BJ (cell line): ENCODE measurements at regions of chr19 and their contacts with region 1.

Region 1: DNA sequence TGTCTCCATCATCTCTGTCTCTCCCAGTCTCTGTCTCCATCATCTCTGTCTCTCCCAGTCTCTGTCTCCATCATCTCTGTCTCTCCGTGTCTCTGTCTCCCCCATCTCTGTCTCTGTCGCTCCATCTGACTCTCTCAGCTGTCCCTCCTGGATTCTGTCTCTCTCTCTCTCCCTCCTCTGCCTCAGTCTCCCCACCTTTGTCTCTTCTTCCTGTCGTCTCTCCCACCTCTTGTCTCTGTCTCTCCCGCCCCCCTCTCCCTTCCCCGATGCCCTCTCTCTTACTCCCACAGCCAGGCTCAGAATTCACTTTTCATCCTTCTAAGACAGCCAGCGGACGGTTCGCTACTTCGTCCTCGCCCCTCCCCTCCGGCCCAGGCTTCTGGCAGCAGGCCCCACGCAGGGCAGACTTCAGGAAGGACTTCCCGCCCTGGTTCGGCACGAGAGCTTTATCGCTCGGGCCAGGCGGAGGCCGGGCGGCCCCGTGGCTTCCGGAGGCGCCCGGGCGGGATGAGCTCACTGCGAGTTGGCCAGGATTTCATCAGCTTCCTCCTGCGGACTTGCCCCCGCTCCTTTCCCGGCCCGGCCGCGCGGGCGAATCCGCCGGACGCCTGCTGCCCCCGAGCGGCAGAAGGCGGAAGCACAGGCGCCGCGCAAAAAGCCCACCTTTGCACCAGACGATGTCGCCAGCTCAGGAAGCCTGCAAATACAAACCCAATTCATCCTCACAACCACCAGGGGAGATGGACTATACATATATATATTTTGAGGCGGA is 12.4 kb upstream of the CCDC9 start:
- DNase-seq: peak; percentile 80
- H3K4me3 ChIP-seq: peak overlapping the region; percentile 55
- H3K27me3 ChIP-seq: no peaks in the 10 kb centered on the region
- CTCF ChIP-seq: peak; percentile 93

Region 2: GRCh38 chr19:46579361-46579879 is 664.5 kb before region 1 on chr19:
- CTCF ChIA-PET with region 1: no interaction called
- POLR2A ChIA-PET with region 1: interaction called, 21 read pairs
- DNase-seq: no peak
- H3K4me3 ChIP-seq: no peak overlapping the region
- H3K27me3 ChIP-seq: no peaks in the 10 kb centered on the region; the same call in none of the 2 replicates
- CTCF ChIP-seq: peak; percentile 38; the same call in 1 of the 2 replicates

Region 3: GRCh38 chr19:47157431-47158321 is 86.3 kb before region 1 on chr19:
- CTCF ChIA-PET with region 1: interaction called, 339 read pairs
- POLR2A ChIA-PET with region 1: interaction called, 5 read pairs
- DNase-seq: no peak
- H3K4me3 ChIP-seq: no peak overlapping the region
- H3K27me3 ChIP-seq: no peaks in the 10 kb centered on the region
- CTCF ChIP-seq: no peak

Region 4: GRCh38 chr19:47225746-47226425 is 18.1 kb before region 1 on chr19:
- CTCF ChIA-PET with region 1: interaction called, 44 read pairs
- POLR2A ChIA-PET with region 1: interaction called, 9 read pairs
- DNase-seq: no peak
- H3K4me3 ChIP-seq: peak overlapping the region; percentile 77
- H3K27me3 ChIP-seq: no peaks in the 10 kb centered on the region
- CTCF ChIP-seq: 0 out of 2 replicates have a peak, but pooled peaks have one; percentile 6

Region 5: GRCh38 chr19:47256688-47257443 is 12.9 kb after region 1 on chr19:
- CTCF ChIA-PET with region 1: interaction called, 85 read pairs
- POLR2A ChIA-PET with region 1: interaction called, 5 read pairs
- DNase-seq: peak; percentile 87
- H3K4me3 ChIP-seq: peak overlapping the region; percentile 63
- H3K27me3 ChIP-seq: no peaks in the 10 kb centered on the region
- CTCF ChIP-seq: no peak

Region 6: DNA sequence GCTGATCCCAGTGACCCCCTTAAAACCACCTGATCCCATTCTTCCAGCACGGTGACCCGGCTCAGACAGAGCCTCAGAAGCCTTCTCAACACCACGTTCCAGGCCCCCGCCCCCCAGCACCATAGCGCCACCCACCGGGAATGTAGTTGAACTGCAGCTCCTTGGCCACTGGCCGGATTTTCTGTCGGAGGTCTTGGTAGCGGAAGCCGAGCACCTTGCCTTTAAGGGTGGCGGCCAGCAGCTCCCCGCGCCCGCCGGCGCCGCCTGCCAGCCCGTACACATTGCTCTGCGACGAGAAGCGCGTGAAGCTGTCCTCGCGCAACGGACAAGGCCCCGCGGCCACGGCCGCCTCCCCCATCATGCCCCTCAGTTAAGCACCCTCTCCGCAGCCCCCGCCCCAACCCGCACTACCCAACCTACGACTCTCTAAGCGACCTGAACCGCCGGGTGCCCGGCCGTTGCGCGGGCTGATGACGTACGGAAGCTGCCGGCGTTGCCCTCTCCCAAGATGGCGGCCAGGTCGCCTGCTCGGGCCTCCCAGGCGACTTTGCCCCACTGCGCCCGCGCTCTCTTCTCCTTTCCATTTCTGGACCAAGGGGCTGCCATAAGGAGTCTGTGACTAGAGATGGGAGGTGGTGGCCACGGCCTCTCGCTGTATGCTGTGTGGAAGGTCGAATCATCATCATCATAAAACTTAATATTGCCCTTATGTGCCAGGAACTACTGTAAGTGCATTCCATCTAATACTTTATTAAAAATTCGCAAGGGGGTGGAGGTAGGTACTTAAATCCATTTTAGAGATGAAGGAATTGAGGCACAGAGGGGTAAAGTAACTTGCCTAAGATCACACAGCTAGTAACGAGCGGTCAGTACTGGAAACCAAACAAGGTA is 240.1 kb after region 1 on chr19 and contains the start of gene KPTN:
- CTCF ChIA-PET with region 1: no interaction called
- POLR2A ChIA-PET with region 1: no interaction called
- DNase-seq: peak; percentile 33
- H3K4me3 ChIP-seq: peak within 1 kb of the TSS; percentile 90
- H3K27me3 ChIP-seq: no peaks in the 10 kb centered on the region
- CTCF ChIP-seq: peak; percentile 98
- polyA plus RNA-seq, gene KPTN: 7.0 and 12.1 TPM in 2 replicates